ENCODE measurements at regions of chr21 and their contacts with region 1.

Region 1: DNA sequence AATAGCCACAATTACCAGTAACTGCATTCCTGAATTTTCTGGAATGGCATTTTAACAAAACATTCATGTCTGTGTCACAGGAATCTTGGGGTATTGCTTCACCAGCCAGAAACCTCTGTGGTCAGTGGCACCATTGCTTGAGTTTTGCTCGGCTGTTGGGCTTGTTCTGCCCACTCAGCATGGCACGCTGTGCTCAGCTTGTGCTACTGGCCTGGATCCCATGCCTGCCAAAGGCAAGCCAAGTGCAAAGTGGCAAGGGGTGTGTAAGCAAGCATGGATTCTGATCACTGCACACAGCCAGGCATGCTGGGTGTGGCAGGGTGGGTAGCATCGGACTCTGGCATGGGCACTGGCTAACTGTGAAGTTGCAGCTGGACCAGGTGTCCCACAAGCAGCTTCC is 1150.9 kb downstream of the MRPL39 start:
- DNase-seq: no peak
- ATAC-seq: no peak
- H3K4me3 ChIP-seq: no peak overlapping the region
- H3K27ac ChIP-seq: no peak overlapping the region
- H3K4me1 ChIP-seq: no peaks in the 10 kb centered on the region
- H3K27me3 ChIP-seq: no peaks in the 10 kb centered on the region
- CTCF ChIP-seq: no peak
- POLR2A ChIP-seq: no peak

Region 2: DNA sequence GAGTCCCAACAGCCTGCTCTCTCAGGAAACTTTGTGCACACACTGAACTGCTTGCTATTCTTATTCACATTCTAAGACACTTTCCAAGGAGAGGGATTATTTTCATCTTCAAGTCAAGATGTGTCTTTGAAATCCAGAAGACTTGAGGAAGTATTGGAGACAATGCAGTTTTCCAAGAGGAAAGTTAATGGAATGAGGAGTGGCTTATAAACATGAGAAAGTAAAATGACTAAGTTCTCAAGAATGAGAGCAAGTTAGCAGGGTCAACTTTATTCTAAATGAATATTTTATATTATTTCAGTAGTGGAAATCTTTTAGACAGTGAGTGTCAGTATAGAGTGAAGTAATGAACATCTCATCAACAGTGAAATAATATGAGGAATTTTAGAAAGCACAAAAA is 88.4 kb before region 1 on chr21:
- in situ Hi-C with region 1: loop called in 1 of 4 experiments (anchors 25 kb)
- intact Hi-C with region 1: no loop called
- DNase-seq: no peak
- ATAC-seq: no peak
- H3K4me3 ChIP-seq: no peak overlapping the region
- H3K27ac ChIP-seq: no peak overlapping the region
- H3K4me1 ChIP-seq: no peaks in the 10 kb centered on the region
- H3K27me3 ChIP-seq: no peaks in the 10 kb centered on the region
- CTCF ChIP-seq: no peak
- POLR2A ChIP-seq: no peak

Region 3: DNA sequence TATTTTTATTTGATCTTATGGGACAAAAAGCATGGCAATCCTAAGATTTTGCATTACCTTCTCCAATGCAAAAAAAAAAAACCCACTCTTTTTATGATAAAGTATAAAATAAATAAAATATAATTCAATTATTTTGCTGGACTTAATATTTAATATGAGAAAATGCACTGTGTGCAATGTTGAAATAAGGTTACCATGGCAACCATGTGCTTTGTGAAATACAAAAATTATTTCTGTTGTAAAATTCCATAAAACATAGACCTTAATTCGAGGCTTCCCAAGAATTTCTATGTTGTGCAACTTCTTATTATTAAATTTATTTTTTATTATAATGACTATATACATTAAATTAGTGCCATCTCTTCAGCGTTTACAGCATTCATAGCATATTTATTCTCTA is 161.5 kb after region 1 on chr21:
- in situ Hi-C with region 1: no loop called
- intact Hi-C with region 1: no loop called
- DNase-seq: no peak
- ATAC-seq: no peak
- H3K4me3 ChIP-seq: no peak overlapping the region
- H3K27ac ChIP-seq: no peak overlapping the region
- H3K4me1 ChIP-seq: no peaks in the 10 kb centered on the region
- H3K27me3 ChIP-seq: no peaks in the 10 kb centered on the region
- CTCF ChIP-seq: no peak
- POLR2A ChIP-seq: no peak

Region 4: DNA sequence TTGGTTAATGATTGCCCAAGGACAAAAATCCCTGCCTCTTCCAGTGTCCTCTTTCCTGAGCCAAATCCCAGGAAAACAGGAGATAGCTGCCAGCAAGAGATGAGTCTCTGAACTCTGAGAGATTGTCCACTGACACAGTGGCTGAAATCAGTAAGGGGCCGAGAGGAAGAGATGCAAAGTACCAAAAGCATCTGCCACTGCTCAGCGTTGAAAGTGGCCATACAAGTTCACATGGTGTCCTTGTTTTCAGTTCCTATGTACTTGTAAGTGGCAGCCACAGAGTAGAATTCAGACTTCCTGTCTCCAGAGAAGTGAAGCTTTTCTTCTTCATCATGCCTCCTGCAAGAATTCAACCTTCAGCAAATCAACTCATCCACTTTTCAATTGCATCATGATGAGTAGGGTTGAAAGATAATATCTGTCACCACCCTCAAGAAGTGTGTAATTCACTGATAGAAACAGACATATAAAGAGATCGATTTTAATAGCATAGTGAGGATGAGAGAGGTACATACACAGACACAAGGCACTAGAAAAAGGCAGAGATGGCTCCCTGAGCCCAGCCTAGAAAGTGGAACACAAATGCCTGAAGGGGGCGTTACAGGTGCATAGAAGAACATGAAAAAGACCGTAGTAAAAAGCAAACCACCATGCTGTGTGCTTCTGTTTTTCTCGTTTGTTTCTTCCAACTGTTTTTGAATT is 965.1 kb after region 1 on chr21:
- in situ Hi-C with region 1: no loop called
- intact Hi-C with region 1: no loop called
- DNase-seq: no peak
- ATAC-seq: no peak
- H3K4me3 ChIP-seq: no peak overlapping the region
- H3K27ac ChIP-seq: no peak overlapping the region
- H3K4me1 ChIP-seq: no peaks in the 10 kb centered on the region
- H3K27me3 ChIP-seq: no peaks in the 10 kb centered on the region
- CTCF ChIP-seq: no peak
- POLR2A ChIP-seq: no peak

Measured in gastrocnemius medialis (tissue), 4 donors.